Activated CD4-positive, alpha-beta T cell treated with anti-CD3 and anti-CD28 coated beads for 36 hours (primary cell): ENCODE measurements at regions of chr17 and their contacts with region 1.

Region 1: GRCh38 chr17:16243811-16244567 is 27.0 kb downstream of the PIGL start:
- DNase-seq: peak; percentile 42
- ATAC-seq: peak; percentile 66
- H3K4me3 Mint-ChIP-seq: no peak overlapping the region
- H3K27ac Mint-ChIP-seq: no peak overlapping the region
- H3K4me1 Mint-ChIP-seq: peaks cover 14% of the 10 kb centered on the region
- H3K27me3 Mint-ChIP-seq: no peaks in the 10 kb centered on the region

Region 2: GRCh38 chr17:16189791-16190348 is 54.1 kb before region 1 on chr17:
- CTCF ChIA-PET with region 1: no interaction called
- POLR2A ChIA-PET with region 1: no interaction called
- intact Hi-C with region 1: loop called in 1 of 2 experiments (anchors 10 kb)
- DNase-seq: no peak
- ATAC-seq: no peak
- H3K4me3 Mint-ChIP-seq: no peak overlapping the region
- H3K27ac Mint-ChIP-seq: no peak overlapping the region
- H3K4me1 Mint-ChIP-seq: peaks cover 23% of the 10 kb centered on the region
- H3K27me3 Mint-ChIP-seq: no peaks in the 10 kb centered on the region

Region 3: GRCh38 chr17:17628388-17629008 is 1384.5 kb after region 1 on chr17:
- CTCF ChIA-PET with region 1: no interaction called
- POLR2A ChIA-PET with region 1: no interaction called
- intact Hi-C with region 1: no loop called
- DNase-seq: peak; percentile 66
- ATAC-seq: peak; percentile 88
- H3K4me3 Mint-ChIP-seq: peak overlapping the region; percentile 70
- H3K27ac Mint-ChIP-seq: peak overlapping the region; percentile 86
- H3K4me1 Mint-ChIP-seq: peaks cover 11% of the 10 kb centered on the region
- H3K27me3 Mint-ChIP-seq: no peaks in the 10 kb centered on the region